HepG2 (cell line): ENCODE measurements at regions of chr19 and their contacts with region 1.

Region 1: DNA sequence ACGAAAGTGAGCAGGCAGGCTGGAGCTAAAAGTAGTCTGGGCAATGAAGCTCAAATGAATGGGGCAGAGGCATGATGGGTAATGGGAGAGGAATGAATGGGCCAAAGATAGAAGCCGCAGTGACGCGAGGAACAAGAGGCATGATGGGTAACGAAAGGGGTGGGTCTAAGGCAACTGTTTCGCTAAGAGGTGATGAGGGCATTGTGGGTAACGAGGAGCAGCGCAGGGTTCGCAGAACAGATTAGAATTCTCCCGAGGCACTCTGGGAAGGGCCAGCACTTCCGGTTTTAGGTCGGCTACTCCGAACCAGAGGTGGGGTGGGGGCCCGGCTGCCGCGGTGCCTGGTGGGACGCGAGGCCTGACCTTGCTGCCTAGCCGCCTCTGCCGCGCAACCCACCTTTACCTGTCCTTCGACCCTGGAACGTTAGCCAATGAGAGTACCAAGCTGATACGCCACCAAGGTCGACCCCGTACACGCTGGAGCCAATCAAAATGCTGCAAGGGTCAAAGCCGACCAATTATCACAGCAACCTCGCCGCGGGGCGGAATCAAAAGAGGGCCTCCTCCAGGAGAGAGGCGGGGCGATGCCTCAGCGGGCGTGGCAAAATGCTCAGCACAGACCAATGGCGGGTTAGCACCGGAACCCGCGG is 563 bp upstream of the TOMM40 start:
- DNase-seq: peak; percentile 100
- ATAC-seq: peak; percentile 91
- H3K4me3 ChIP-seq: peak overlapping the region; percentile 45 to 64 (median 48)
- H3K27ac ChIP-seq: peak overlapping the region; percentile 94
- H3K4me1 ChIP-seq: peaks cover 28% of the 10 kb centered on the region
- H3K27me3 ChIP-seq: no peaks in the 10 kb centered on the region; a peak in 1 of 5 replicates
- CTCF ChIP-seq: no peak
- EP300 ChIP-seq: peak in 1 of 2 experiments; percentile 38; a peak in 1 of 4 replicates
- POLR2A ChIP-seq: peak; percentile 79 to 88
- RAD21 ChIP-seq: no peak

Region 2: GRCh38 chr19:44845612-44846454 is 44.7 kb before region 1 on chr19 and contains the start of gene NECTIN2:
- CTCF ChIA-PET with region 1: no interaction called
- POLR2A ChIA-PET with region 1: interaction called, 11 read pairs
- in situ Hi-C with region 1: no loop called
- intact Hi-C with region 1: loop called (anchors 2 kb)
- DNase-seq: peak; percentile 95
- ATAC-seq: peak; percentile 61
- H3K4me3 ChIP-seq: peak within 1 kb of the TSS; percentile 76 to 95 (median 84)
- H3K27ac ChIP-seq: peak within 1 kb of the TSS; percentile 95
- H3K4me1 ChIP-seq: peaks cover 48% of the 10 kb centered on the region
- H3K27me3 ChIP-seq: no peaks in the 10 kb centered on the region; a peak in 1 of 5 replicates
- CTCF ChIP-seq: peak; percentile 94
- EP300 ChIP-seq: no peak
- POLR2A ChIP-seq: peak; percentile 62 to 87
- RAD21 ChIP-seq: peak; percentile 30; the same call in 1 of the 2 replicates
- total RNA-seq, gene NECTIN2: 32.7 and 75.4 TPM in 2 replicates

Region 3: DNA sequence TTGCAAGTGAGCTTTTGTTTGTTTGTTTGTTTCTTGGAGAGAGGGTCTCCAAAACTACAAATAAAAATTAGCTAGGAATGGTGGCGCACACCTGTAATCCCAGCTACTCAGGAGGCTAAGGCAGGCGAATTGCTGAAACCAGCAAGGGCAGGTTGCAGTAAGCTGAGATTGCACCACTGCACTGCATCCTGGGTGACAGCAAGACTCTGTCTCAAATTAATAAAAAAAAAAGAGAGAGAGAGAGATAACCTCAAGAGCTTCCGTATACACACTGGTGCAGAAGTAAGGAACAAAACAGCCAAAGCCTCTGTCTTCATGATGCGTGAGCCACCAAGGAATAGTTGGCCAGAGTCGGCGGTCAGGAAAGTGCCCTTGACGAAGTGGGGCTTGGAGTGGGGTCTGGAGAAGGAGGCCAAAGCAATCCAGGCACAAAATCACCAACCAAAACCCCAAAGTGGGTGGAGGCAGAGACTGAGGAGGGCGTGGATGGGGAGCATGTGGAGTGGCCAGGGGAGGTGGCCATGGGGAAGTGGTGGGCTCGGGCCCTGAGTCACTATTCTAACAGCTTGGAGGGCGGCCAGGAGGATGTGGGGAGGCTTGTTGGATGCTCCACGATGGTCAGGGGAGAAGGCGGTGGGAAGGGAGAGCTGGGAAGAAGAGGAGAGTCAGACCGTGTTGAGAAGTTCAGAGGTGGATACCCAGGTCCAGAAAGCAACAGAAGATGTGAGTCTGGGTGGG is 20.6 kb before region 1 on chr19:
- CTCF ChIA-PET with region 1: no interaction called
- POLR2A ChIA-PET with region 1: interaction called, 10 read pairs
- in situ Hi-C with region 1: no loop called
- intact Hi-C with region 1: no loop called
- DNase-seq: no peak
- ATAC-seq: peak; percentile 13; the same call in 1 of the 3 replicates
- H3K4me3 ChIP-seq: no peak overlapping the region; a peak in 1 of 6 replicates
- H3K27ac ChIP-seq: peak overlapping the region; percentile 64
- H3K4me1 ChIP-seq: peaks cover 59% of the 10 kb centered on the region
- H3K27me3 ChIP-seq: no peaks in the 10 kb centered on the region
- CTCF ChIP-seq: no peak
- EP300 ChIP-seq: no peak
- POLR2A ChIP-seq: no peak
- RAD21 ChIP-seq: no peak

Region 4: GRCh38 chr19:44912854-44913253 is 22.4 kb after region 1 on chr19:
- CTCF ChIA-PET with region 1: no interaction called
- POLR2A ChIA-PET with region 1: interaction called, 15 read pairs
- in situ Hi-C with region 1: no loop called
- intact Hi-C with region 1: no loop called
- DNase-seq: peak; percentile 72
- ATAC-seq: peak; percentile 16
- H3K4me3 ChIP-seq: peak overlapping the region in 1 of 3 experiments; percentile 77; a peak in 2 of 6 replicates
- H3K27ac ChIP-seq: peak overlapping the region; percentile 88
- H3K4me1 ChIP-seq: peaks cover 66% of the 10 kb centered on the region
- H3K27me3 ChIP-seq: no peaks in the 10 kb centered on the region
- CTCF ChIP-seq: no peak
- EP300 ChIP-seq: peak in 1 of 2 experiments; percentile 79; a peak in 2 of 4 replicates
- POLR2A ChIP-seq: 0 out of 4 replicates have a peak, but pooled peaks of 1 of the 2 experiments have one; percentile 31
- RAD21 ChIP-seq: peak; percentile 40

Region 5: GRCh38 chr19:44954824-44955586 is 64.5 kb after region 1 on chr19 and contains the start of gene CLPTM1:
- CTCF ChIA-PET with region 1: no interaction called
- POLR2A ChIA-PET with region 1: interaction called, 13 read pairs
- in situ Hi-C with region 1: no loop called
- intact Hi-C with region 1: no loop called
- DNase-seq: peak; percentile 91
- ATAC-seq: peak; percentile 85
- H3K4me3 ChIP-seq: peak within 1 kb of the TSS; percentile 93 to 100 (median 99)
- H3K27ac ChIP-seq: peak within 1 kb of the TSS; percentile 91
- H3K4me1 ChIP-seq: peaks cover 71% of the 10 kb centered on the region
- H3K27me3 ChIP-seq: no peaks in the 10 kb centered on the region; a peak in 1 of 5 replicates
- CTCF ChIP-seq: 0 out of 2 replicates have a peak, but pooled peaks have one; percentile 16
- EP300 ChIP-seq: peak in 1 of 2 experiments; percentile 5; a peak in 1 of 4 replicates
- POLR2A ChIP-seq: peak; percentile 77 to 85
- RAD21 ChIP-seq: no peak
- total RNA-seq, gene CLPTM1: 15.3 and 34.9 TPM in 2 replicates